ENCODE measurements at regions of chr1 and their contacts with region 1.

Region 1: GRCh38 chr1:234925440-234926263 is 203.0 kb downstream of the TOMM20 start:
- DNase-seq: no peak
- ATAC-seq: peak; percentile 3
- H3K4me3 Mint-ChIP-seq: peak overlapping the region; percentile 48
- H3K27ac Mint-ChIP-seq: peak overlapping the region; percentile 95
- H3K4me1 Mint-ChIP-seq: peaks cover 51% of the 10 kb centered on the region
- H3K27me3 Mint-ChIP-seq: no peaks in the 10 kb centered on the region
- CTCF ChIP-seq: no peak

Region 2: DNA sequence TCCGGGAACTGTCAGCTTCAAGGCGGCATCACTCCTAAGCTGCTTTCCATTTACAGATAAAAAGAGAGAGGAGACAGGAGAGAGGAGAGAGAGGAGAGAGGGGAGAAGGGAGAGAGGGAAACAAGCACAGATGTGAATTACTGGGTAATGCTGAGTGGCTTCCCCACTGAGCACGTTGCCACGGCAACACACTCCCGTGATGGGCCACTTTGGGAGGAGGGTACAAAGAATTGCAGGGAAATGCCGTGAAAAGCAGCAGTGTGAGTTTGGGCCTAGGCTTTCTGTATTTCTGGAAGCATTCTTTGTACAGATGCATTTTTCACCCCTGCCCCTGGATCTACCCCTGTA is 187.7 kb before region 1 on chr1:
- CTCF ChIA-PET with region 1: no interaction called
- POLR2A ChIA-PET with region 1: no interaction called
- intact Hi-C with region 1: no loop called
- DNase-seq: no peak
- ATAC-seq: no peak
- H3K4me3 Mint-ChIP-seq: no peak overlapping the region
- H3K27ac Mint-ChIP-seq: no peak overlapping the region
- H3K4me1 Mint-ChIP-seq: peaks cover 18% of the 10 kb centered on the region
- H3K27me3 Mint-ChIP-seq: no peaks in the 10 kb centered on the region
- CTCF ChIP-seq: no peak

Region 3: GRCh38 chr1:234881893-234882771 is 43.5 kb before region 1 on chr1:
- CTCF ChIA-PET with region 1: no interaction called
- POLR2A ChIA-PET with region 1: no interaction called
- intact Hi-C with region 1: loop called (anchors 2 kb)
- DNase-seq: peak; percentile 53
- ATAC-seq: peak; percentile 81
- H3K4me3 Mint-ChIP-seq: no peak overlapping the region
- H3K27ac Mint-ChIP-seq: peak overlapping the region; percentile 64
- H3K4me1 Mint-ChIP-seq: peaks cover 44% of the 10 kb centered on the region
- H3K27me3 Mint-ChIP-seq: peaks cover 2% of the 10 kb centered on the region
- CTCF ChIP-seq: no peak

Region 4: GRCh38 chr1:234893725-234894630 is 31.7 kb before region 1 on chr1:
- CTCF ChIA-PET with region 1: no interaction called
- POLR2A ChIA-PET with region 1: no interaction called
- intact Hi-C with region 1: no loop called
- DNase-seq: peak; percentile 78
- ATAC-seq: peak; percentile 84
- H3K4me3 Mint-ChIP-seq: no peak overlapping the region
- H3K27ac Mint-ChIP-seq: peak overlapping the region; percentile 31
- H3K4me1 Mint-ChIP-seq: peaks cover 34% of the 10 kb centered on the region
- H3K27me3 Mint-ChIP-seq: no peaks in the 10 kb centered on the region
- CTCF ChIP-seq: no peak

Measured in activated CD8-positive, alpha-beta T cell treated with anti-CD3 and anti-CD28 coated beads for 36 hours (primary cell).